CD4-positive, alpha-beta memory T cell (primary cell): ENCODE measurements at regions of chr5 and their contacts with region 1.

Region 1: DNA sequence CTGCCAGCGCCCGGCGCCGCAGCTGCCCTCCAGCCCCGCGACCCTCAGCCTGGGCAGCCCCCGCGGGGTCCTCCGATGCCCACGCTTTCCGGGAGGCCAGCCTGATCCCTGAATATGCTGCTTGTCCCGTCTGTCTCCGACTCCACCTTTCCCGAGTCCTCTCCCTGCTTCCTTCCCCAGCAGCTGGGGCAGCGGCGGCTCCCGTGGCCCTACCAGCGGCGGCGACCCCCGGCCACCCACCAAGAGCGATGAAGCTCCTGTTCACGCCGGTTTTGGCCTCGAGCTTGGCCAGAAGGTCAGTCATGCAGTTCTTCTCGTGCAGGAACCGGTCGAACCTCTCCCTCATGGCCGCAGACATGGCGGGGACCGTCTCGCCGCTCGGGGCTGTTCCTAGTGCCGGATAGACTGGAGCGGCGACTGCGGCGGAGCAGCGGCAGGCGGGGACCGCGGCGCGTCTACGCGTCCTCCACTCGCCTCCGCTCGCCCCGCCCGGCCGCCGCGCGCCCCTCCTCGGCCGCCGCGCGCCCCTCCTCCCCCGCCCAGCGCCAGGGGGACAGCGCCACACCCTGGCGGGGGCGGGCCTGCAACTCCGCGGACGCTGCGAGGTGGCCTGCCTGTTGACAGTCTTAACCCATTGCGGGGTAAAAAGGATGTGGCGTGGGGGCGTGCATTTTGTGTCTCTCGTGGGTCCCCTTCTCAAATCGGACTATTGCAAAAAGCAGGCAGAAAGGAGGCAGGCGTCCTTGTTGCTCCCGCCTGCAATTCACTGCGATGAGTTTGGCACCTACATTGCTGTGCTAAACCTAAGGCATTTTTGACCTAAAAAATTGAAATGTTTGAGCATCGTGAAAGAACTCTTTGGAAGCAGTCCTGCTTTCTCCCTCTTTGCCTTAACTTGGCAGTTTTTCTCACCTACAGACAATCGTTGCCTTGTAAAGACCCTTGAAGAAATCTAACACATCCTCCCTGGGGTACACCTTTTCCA is at the start of gene REEP5:
- DNase-seq: peak; percentile 83 to 87 (median 85)
- H3K4me3 ChIP-seq: peak within 1 kb of the TSS; percentile 53 to 78
- H3K4me3 Mint-ChIP-seq: peak within 1 kb of the TSS; percentile 91 to 98 (median 93)
- H3K27ac ChIP-seq: peak within 1 kb of the TSS; percentile 84
- H3K27ac Mint-ChIP-seq: peak within 1 kb of the TSS; percentile 86 to 97 (median 96)
- H3K4me1 ChIP-seq: peaks cover 69% of the 10 kb centered on the region
- H3K4me1 Mint-ChIP-seq: peaks cover 49 to 77% (median 57%) of the 10 kb centered on the region in 4 donors
- H3K27me3 ChIP-seq: no peaks in the 10 kb centered on the region
- H3K27me3 Mint-ChIP-seq: no peaks in the 10 kb centered on the region
- total RNA-seq, gene REEP5: 55.6 to 61.1 TPM

Region 2: GRCh38 chr5:112757468-112758208 is 164.5 kb before region 1 on chr5:
- CTCF ChIA-PET with region 1: interaction called, 4 read pairs
- POLR2A ChIA-PET with region 1: no interaction called
- intact Hi-C with region 1: loop called (anchors 5 kb)
- DNase-seq: peak in 4 of 5 donors; percentile 50 to 64 (median 52)
- H3K4me3 ChIP-seq: no peak overlapping the region
- H3K4me3 Mint-ChIP-seq: peak overlapping the region in 1 of 8 donors; percentile 20
- H3K27ac ChIP-seq: no peak overlapping the region
- H3K27ac Mint-ChIP-seq: peak overlapping the region in 5 of 7 donors; percentile 3 to 71 (median 59)
- H3K4me1 ChIP-seq: no peaks in the 10 kb centered on the region
- H3K4me1 Mint-ChIP-seq: peaks cover 9 to 12% (median 9%) of the 10 kb centered on the region in 4 donors
- H3K27me3 ChIP-seq: no peaks in the 10 kb centered on the region
- H3K27me3 Mint-ChIP-seq: no peaks in the 10 kb centered on the region

Region 3: DNA sequence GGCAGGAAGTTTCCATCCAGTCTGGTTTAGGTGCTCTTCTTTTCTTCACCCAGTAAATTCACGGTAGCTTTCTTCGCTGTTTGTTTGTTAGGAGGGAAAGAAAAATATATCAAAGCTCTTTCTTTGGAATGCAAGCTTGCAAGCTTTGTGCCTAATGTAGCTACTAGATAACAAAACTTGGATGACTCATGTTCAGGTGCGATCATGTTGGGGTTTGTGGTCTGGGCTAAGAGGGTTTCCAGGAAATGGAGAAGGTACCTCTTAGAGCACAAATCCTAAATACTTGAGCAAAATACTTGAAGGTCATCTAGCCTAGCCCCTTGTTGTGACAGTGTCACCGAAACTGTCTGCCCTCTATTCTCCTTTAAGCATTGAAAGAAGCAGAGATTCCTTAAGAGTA is 43.4 kb before region 1 on chr5:
- CTCF ChIA-PET with region 1: interaction called, 5 read pairs
- POLR2A ChIA-PET with region 1: interaction called, 9 read pairs
- intact Hi-C with region 1: loop called (anchors 2 kb)
- DNase-seq: peak; percentile 32 to 87 (median 49)
- H3K4me3 ChIP-seq: peak overlapping the region in 1 of 2 donors; percentile 13
- H3K4me3 Mint-ChIP-seq: peak overlapping the region; percentile 3 to 73 (median 48)
- H3K27ac ChIP-seq: peak overlapping the region; percentile 31
- H3K27ac Mint-ChIP-seq: peak overlapping the region; percentile 32 to 88 (median 80)
- H3K4me1 ChIP-seq: peaks cover 47% of the 10 kb centered on the region
- H3K4me1 Mint-ChIP-seq: peaks cover 30 to 50% (median 38%) of the 10 kb centered on the region in 4 donors
- H3K27me3 ChIP-seq: no peaks in the 10 kb centered on the region
- H3K27me3 Mint-ChIP-seq: no peaks in the 10 kb centered on the region

Region 4: DNA sequence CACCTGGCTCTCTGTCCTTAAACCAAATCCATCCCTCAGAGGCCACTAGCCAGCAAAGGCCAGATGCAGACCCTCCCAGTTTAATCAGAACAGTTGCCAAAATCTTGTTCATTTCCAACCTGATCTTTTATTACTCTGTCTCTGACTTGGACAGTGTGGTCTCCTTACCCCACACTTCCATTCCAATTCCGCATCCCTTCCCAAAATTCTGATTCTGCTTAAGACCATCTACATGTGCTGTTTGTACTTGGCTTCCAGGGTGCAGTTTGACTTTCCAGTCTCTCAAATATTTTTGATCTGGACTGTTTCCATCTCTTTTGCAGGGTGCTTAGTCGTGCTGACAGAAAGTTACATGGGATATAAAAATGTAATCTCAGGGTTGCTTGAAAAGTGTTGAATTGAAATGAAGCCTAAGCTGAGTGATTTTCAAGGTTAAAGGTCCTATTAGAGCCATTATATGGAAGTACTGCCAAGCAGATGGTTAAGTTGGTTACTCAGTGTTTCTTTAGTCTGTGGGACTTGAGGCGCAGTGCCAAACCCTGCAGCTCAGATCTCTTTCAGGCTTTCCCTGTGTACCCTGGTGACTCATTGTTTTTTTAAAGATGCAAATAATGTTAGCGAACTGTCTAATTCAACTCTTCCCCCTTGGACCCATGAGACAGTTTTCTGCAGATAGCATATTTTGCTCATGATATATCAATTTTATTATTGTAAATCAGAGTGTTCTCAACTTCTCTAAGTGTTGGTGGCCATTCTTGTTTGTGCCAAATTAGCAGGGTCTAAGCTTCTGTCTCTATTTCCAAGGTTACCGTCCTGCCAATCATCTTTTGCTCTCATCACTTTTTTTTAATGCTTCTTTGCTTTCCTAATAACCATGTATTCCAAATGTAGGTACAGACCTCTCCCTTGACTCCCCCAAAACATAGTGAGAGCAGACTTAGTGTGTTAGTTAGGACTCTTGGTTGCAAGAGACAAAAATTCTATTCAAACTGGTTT is 36.3 kb after region 1 on chr5:
- CTCF ChIA-PET with region 1: interaction called, 76 read pairs
- POLR2A ChIA-PET with region 1: interaction called, 3 read pairs
- intact Hi-C with region 1: no loop called
- DNase-seq: no peak
- H3K4me3 ChIP-seq: no peak overlapping the region
- H3K4me3 Mint-ChIP-seq: no peak overlapping the region
- H3K27ac ChIP-seq: no peak overlapping the region
- H3K27ac Mint-ChIP-seq: no peak overlapping the region
- H3K4me1 ChIP-seq: peaks cover 12% of the 10 kb centered on the region
- H3K4me1 Mint-ChIP-seq: peaks cover 2 to 8% (median 5%) of the 10 kb centered on the region in 4 donors
- H3K27me3 ChIP-seq: no peaks in the 10 kb centered on the region
- H3K27me3 Mint-ChIP-seq: peaks cover 0 to 1% of the 10 kb centered on the region in 2 donors

Region 5: GRCh38 chr5:112995764-112996618 is 73.9 kb after region 1 on chr5:
- CTCF ChIA-PET with region 1: interaction called, 18 read pairs
- POLR2A ChIA-PET with region 1: interaction called, 5 read pairs
- intact Hi-C with region 1: no loop called
- DNase-seq: peak; percentile 65 to 76 (median 71)
- H3K4me3 ChIP-seq: no peak overlapping the region
- H3K4me3 Mint-ChIP-seq: peak overlapping the region in 2 of 8 donors; percentile 19 to 57
- H3K27ac ChIP-seq: no peak overlapping the region
- H3K27ac Mint-ChIP-seq: peak overlapping the region in 5 of 7 donors; percentile 1 to 52 (median 17)
- H3K4me1 ChIP-seq: peaks cover 11% of the 10 kb centered on the region
- H3K4me1 Mint-ChIP-seq: peaks cover 20 to 41% (median 25%) of the 10 kb centered on the region in 4 donors
- H3K27me3 ChIP-seq: no peaks in the 10 kb centered on the region
- H3K27me3 Mint-ChIP-seq: no peaks in the 10 kb centered on the region

Region 6: GRCh38 chr5:113166852-113167366 is 244.8 kb after region 1 on chr5:
- CTCF ChIA-PET with region 1: no interaction called
- POLR2A ChIA-PET with region 1: no interaction called
- intact Hi-C with region 1: no loop called
- DNase-seq: no peak
- H3K4me3 ChIP-seq: no peak overlapping the region
- H3K4me3 Mint-ChIP-seq: no peak overlapping the region
- H3K27ac ChIP-seq: no peak overlapping the region
- H3K27ac Mint-ChIP-seq: peak overlapping the region in 1 of 7 donors; percentile 22
- H3K4me1 ChIP-seq: no peaks in the 10 kb centered on the region
- H3K4me1 Mint-ChIP-seq: peaks cover 0 to 16% (median under 1%) of the 10 kb centered on the region in 4 donors
- H3K27me3 ChIP-seq: no peaks in the 10 kb centered on the region
- H3K27me3 Mint-ChIP-seq: no peaks in the 10 kb centered on the region

Region 7: GRCh38 chr5:113212244-113212920 is 290.3 kb after region 1 on chr5:
- CTCF ChIA-PET with region 1: no interaction called
- POLR2A ChIA-PET with region 1: no interaction called
- intact Hi-C with region 1: no loop called
- DNase-seq: no peak
- H3K4me3 ChIP-seq: no peak overlapping the region
- H3K4me3 Mint-ChIP-seq: no peak overlapping the region
- H3K27ac ChIP-seq: no peak overlapping the region
- H3K27ac Mint-ChIP-seq: no peak overlapping the region
- H3K4me1 ChIP-seq: no peaks in the 10 kb centered on the region
- H3K4me1 Mint-ChIP-seq: peaks cover 0 to 6% (median 2%) of the 10 kb centered on the region in 4 donors
- H3K27me3 ChIP-seq: no peaks in the 10 kb centered on the region
- H3K27me3 Mint-ChIP-seq: peaks cover 0 to 2% of the 10 kb centered on the region in 2 donors